Spleen (tissue), 13 donors: ENCODE measurements at regions of chr4 and their contacts with region 1.

Region 1: GRCh38 chr4:69689599-69689998 is 36.6 kb upstream of the UGT2A1 start:
- DNase-seq: no peak
- H3K4me3 ChIP-seq: no peak overlapping the region
- H3K27ac ChIP-seq: no peak overlapping the region
- H3K4me1 ChIP-seq: peaks cover 0 to 9% (median 4%) of the 10 kb centered on the region in 6 donors
- H3K27me3 ChIP-seq: no peaks in the 10 kb centered on the region
- CTCF ChIP-seq: peak in 10 of 11 experiments; percentile 28 to 71 (median 55)
- POLR2A ChIP-seq: no peak

Region 2: DNA sequence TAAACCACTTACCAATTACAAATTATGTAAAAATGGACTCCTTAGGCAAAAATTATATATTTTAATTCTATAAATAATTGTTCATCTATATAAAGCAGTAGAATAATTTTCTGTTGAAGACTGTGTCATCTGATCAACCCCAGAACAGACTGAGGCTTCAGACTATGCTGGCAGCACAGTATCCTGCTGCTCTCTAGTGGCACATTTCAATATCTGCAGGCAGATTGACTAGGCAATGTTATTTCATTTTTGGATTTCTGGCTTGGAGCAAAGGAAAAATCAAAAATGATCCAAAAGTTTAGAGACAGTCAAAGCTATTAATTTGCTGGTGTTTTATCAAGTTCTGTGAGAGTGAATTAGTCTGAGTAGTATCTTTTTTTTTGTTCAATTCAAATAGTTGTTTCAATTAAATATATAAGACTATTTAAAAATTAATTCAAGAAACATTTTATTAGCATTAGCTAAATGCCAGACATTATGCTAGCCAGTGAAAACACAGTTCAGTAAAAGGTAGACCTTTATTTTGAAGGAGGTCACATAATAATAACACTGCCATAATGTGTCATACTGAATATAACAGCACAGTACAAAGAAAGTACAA is 191.7 kb after region 1 on chr4:
- intact Hi-C with region 1: loop called (anchors 5 kb)
- DNase-seq: no peak
- H3K4me3 ChIP-seq: no peak overlapping the region
- H3K27ac ChIP-seq: no peak overlapping the region
- H3K4me1 ChIP-seq: no peaks in the 10 kb centered on the region
- H3K27me3 ChIP-seq: no peaks in the 10 kb centered on the region
- CTCF ChIP-seq: peak; percentile 39 to 79 (median 68)
- POLR2A ChIP-seq: no peak

Region 3: DNA sequence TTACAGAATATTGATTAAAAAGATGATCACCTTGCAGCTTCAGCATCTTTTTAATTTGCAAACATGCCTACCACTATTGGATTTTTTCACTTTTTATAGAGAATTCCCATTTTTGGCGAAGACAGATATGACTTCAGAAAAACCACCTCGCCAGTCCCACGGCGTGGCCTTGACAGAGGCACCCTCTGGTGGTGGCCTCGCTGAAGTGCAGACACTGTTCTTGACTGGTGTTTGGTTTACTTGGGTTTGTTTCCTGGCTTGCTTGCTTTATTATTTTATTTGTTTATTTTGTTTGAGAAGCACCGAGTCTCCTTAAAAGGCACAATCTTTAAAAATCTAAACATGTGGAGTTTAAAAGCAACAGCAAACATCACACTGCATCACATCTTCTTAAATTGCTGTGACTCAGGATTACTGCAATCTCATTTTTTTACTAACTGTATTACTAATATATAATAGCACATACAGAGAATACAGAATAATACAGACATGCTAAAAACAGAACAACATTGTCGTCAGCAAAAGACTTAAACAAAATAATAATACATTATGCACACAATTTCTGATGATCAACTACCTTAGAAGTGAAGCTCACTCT is 815.7 kb after region 1 on chr4:
- intact Hi-C with region 1: loop called (anchors 10 kb)
- DNase-seq: peak; percentile 86
- H3K4me3 ChIP-seq: no peak overlapping the region
- H3K27ac ChIP-seq: no peak overlapping the region
- H3K4me1 ChIP-seq: peaks cover 0 to 3% (median 0%) of the 10 kb centered on the region in 6 donors
- H3K27me3 ChIP-seq: peaks cover 0 to 4% (median 0%) of the 10 kb centered on the region in 7 donors
- CTCF ChIP-seq: peak; percentile 38 to 87 (median 69)
- POLR2A ChIP-seq: no peak